ENCODE measurements at regions of chr12 and their contacts with region 1.

Region 1: GRCh38 chr12:92505254-92506231 is 197.2 kb upstream of the PLEKHG7 start:
- DNase-seq: peak; percentile 20
- ATAC-seq: peak; percentile 47
- H3K4me3 Mint-ChIP-seq: peak overlapping the region; percentile 77
- H3K27ac Mint-ChIP-seq: peak overlapping the region; percentile 94
- H3K4me1 Mint-ChIP-seq: peaks cover 64% of the 10 kb centered on the region
- H3K27me3 Mint-ChIP-seq: no peaks in the 10 kb centered on the region
- CTCF ChIP-seq: no peak

Region 2: GRCh38 chr12:91991399-91992187 is 514.0 kb before region 1 on chr12:
- CTCF ChIA-PET with region 1: no interaction called
- POLR2A ChIA-PET with region 1: no interaction called
- intact Hi-C with region 1: loop called (anchors 5 kb)
- DNase-seq: no peak
- ATAC-seq: peak; percentile 47
- H3K4me3 Mint-ChIP-seq: no peak overlapping the region
- H3K27ac Mint-ChIP-seq: no peak overlapping the region
- H3K4me1 Mint-ChIP-seq: peaks cover 2% of the 10 kb centered on the region
- H3K27me3 Mint-ChIP-seq: no peaks in the 10 kb centered on the region
- CTCF ChIP-seq: no peak

Region 3: DNA sequence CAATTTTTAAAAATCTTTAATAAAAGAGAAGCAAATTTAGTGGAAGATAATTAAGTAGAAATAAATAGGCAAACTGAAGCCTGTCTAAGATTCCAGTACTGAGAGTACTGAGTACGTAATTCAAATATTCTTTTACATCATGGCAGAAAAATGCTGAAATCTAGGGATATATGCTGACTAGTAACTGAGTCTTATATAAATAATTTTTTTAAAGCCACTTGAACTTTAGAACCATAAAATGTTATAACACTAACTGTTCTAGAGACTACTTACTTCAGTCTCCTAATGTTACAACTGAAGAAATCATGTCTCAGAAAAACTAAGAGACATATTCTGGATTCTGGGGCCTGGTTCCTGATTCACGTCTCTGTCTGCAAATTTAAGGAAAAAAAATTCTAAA is 33.3 kb before region 1 on chr12:
- CTCF ChIA-PET with region 1: interaction called, 6 read pairs
- POLR2A ChIA-PET with region 1: interaction called, 48 read pairs
- intact Hi-C with region 1: loop called (anchors 1 kb)
- DNase-seq: no peak
- ATAC-seq: no peak
- H3K4me3 Mint-ChIP-seq: peak overlapping the region; percentile 48
- H3K27ac Mint-ChIP-seq: peak overlapping the region; percentile 96
- H3K4me1 Mint-ChIP-seq: peaks cover 90% of the 10 kb centered on the region
- H3K27me3 Mint-ChIP-seq: no peaks in the 10 kb centered on the region
- CTCF ChIP-seq: no peak

Region 4: DNA sequence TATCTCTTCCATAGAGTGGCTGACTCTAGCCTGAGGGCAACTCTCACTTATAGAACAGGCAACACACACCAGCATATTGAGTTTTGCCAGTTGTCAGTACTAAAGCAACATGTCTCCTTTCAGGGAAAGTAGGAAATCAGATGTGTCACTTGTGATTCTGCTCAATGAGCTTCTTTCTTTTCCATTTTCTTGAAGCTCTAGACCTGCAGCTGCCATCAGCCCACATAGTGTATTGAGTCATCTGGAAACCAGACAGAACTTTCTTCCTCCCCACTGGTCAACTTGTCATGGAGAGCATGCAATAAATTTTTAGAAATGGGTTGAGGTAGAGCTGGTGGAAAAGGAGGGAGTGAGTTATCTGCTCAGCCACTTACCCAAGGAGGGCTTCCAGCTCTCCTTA is 11.7 kb before region 1 on chr12:
- CTCF ChIA-PET with region 1: interaction called, 4 read pairs
- POLR2A ChIA-PET with region 1: interaction called, 165 read pairs
- intact Hi-C with region 1: loop called (anchors 1 kb)
- DNase-seq: no peak
- ATAC-seq: peak; percentile 33
- H3K4me3 Mint-ChIP-seq: no peak overlapping the region
- H3K27ac Mint-ChIP-seq: peak overlapping the region; percentile 80
- H3K4me1 Mint-ChIP-seq: peaks cover 75% of the 10 kb centered on the region
- H3K27me3 Mint-ChIP-seq: no peaks in the 10 kb centered on the region
- CTCF ChIP-seq: no peak

Region 5: DNA sequence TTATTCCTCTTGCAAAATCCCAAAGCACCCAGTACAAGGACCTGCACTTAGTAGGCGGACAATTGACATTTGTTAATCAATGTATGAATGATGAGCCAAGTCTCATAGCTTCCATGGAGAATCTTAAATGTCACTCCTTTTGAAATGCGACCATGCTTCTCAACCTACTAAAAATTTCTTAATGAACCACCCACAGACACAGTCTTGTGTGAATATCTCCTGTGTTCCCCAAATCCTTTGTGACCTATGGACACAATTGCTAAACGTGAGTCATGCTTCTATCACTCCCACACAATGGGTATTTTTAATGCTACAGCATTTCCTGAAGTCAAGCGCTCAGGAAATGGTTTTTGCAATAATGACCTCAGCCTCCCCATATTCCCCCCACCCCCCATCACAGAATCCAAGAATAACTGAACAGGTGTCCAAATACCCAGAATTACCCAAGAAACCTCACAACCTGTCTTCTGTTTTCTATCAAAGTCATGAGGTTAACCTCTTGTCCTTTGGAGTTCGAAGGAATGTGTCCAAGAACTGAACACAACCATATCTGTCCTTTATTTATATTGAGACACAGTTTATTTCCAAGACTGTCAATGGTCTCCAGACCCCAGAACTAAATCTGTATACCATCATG is 33.7 kb after region 1 on chr12:
- CTCF ChIA-PET with region 1: interaction called, 7 read pairs
- POLR2A ChIA-PET with region 1: interaction called, 10 read pairs
- intact Hi-C with region 1: loop called (anchors 1 kb)
- DNase-seq: no peak
- ATAC-seq: peak; percentile 32
- H3K4me3 Mint-ChIP-seq: peak overlapping the region; percentile 73
- H3K27ac Mint-ChIP-seq: peak overlapping the region; percentile 97
- H3K4me1 Mint-ChIP-seq: peaks cover 79% of the 10 kb centered on the region
- H3K27me3 Mint-ChIP-seq: no peaks in the 10 kb centered on the region
- CTCF ChIP-seq: no peak

Region 6: DNA sequence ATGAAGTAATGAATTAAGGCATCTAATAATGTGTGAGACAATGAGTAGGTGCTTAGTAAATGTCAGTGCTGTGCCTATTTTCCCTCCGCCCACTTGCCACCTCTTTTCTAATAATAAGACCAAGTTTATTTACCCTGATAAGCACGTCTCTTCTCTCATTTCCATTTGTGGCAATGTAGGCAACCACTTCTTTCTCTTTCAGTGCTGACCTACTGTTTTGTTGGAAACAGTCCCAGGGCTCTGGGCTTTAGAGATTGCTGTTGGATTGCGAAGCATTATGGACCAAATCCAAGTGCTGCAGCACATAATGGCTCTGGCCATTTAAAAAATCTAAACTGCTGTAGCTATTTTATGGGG is 56.0 kb after region 1 on chr12:
- CTCF ChIA-PET with region 1: interaction called, 4 read pairs
- POLR2A ChIA-PET with region 1: interaction called, 21 read pairs
- intact Hi-C with region 1: loop called (anchors 2 kb)
- DNase-seq: no peak
- ATAC-seq: no peak
- H3K4me3 Mint-ChIP-seq: no peak overlapping the region
- H3K27ac Mint-ChIP-seq: peak overlapping the region; percentile 65
- H3K4me1 Mint-ChIP-seq: peaks cover 85% of the 10 kb centered on the region
- H3K27me3 Mint-ChIP-seq: no peaks in the 10 kb centered on the region
- CTCF ChIP-seq: no peak

Measured in activated B cell treated with CpG ODN at 0.5 μM for 24 hours (primary cell).